ENCODE measurements at regions of chr3 and their contacts with region 1.

Region 1: GRCh38 chr3:43540624-43541023 is 81.2 kb downstream of the ANO10 start:
- DNase-seq: no peak
- ATAC-seq: no peak

Region 2: GRCh38 chr3:43477600-43477999 is 63.0 kb before region 1 on chr3:
- intact Hi-C with region 1: no loop called
- DNase-seq: peak; percentile 67
- ATAC-seq: peak; percentile 74 to 78

Region 3: DNA sequence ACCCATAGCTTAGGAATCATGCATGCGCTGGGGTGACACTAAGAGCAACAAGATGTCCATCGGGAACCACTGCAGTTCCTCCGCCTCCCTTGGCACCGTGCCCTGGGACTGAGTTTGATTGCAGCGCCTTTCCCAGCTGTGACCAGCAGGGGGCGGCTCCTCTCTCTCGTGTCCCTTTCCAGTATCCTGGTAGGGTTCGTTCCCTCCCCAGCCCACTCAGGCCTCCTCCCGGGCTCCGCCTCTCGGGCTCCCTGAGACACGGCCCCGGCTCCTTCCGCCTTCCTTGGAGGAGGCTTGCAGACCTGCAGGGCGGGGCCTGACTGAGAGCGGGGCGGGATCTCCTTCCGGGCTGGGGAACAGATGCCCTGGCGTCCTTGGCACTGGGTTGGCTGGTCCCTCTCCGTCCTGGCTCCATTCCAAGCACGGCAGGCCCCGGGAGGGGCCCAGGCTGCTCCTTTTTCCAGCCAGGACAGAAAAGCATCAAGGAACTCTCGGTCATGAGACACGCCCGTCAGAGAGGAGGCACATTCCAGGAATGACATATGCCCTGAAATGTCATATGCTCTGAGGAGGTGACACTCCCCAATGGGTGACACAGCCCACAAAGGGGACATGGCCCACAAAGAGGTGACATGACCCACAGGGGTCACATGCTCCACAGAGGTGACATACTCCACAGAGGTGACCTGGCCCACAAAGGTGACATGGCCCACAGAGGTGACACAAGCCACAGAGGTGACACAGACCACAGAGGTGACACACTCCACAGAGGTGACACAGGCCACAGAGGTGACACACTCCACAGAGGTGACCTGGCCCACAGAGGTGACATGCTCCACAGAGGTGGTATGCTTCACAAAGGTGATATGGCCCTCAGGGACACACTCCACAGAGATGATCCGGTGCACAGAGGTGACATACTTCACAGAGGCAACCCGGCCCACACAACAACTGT is 229.1 kb after region 1 on chr3:
- intact Hi-C with region 1: loop called in 1 of 2 experiments (anchors 10 kb)
- DNase-seq: peak; percentile 99
- ATAC-seq: peak; percentile 91 to 96

Region 4: DNA sequence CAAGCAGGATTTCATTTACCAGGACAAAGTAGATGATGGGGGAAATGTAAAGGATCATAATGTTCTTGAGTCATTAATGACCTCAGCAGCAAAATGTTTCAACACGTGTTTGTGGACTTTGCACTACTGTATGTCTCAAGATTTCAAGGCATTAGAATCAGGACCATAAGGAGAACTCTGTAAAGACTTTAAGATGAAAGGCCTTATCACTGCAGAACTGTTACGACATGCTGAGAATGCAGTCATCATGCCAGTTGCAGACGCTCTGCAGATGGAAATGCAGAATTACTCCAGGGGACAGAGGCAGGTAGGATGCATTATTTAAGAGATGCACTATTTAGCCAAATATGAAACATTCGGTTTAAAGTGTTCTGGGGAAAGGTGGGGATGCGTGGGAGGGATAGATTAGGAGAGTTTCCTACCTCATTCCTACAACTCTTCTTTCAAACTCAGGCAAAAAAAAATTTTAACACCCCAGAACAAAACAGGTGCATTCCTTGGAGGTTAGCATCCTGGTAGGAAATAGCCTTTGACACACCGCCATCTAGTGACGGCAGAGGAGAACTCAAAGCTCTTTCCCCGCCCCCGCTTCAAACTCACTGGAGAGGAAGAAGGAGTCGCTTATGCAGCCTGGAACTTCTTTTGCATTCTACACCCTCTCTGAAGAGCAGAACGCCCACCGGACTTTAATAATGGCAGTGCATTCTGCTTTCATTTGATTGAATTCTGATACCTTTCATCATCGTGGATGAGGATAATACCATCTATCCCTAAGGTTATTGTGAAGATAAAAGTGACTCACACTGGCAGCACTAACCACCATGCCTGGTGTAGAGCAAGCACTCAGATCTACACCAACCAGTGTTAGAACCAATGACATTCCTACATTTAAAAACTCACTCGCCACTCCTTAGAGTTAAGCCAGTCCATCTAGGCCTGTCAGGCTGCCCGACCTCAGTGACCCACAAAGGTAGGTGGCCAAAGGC is 658.0 kb after region 1 on chr3:
- intact Hi-C with region 1: loop called (anchors 5 to 10 kb)
- DNase-seq: peak; percentile 66
- ATAC-seq: peak; percentile 80 to 89

Region 5: GRCh38 chr3:44208086-44208485 is 667.5 kb after region 1 on chr3:
- intact Hi-C with region 1: loop called in 1 of 2 experiments (anchors 10 kb)
- DNase-seq: no peak
- ATAC-seq: no peak

Region 6: GRCh38 chr3:44235604-44236484 is 695.2 kb after region 1 on chr3:
- intact Hi-C with region 1: loop called in 1 of 2 experiments (anchors 10 kb)
- DNase-seq: peak; percentile 57
- ATAC-seq: peak; percentile 95

Measured in left cardiac atrium (tissue), 4 donors.